H1 (cell line): ENCODE measurements at regions of chr4 and their contacts with region 1.

Region 1: GRCh38 chr4:142567199-142567598 is 278.9 kb downstream of the INPP4B start:
- DNase-seq: peak; percentile 25 to 49
- H3K4me3 ChIP-seq: no peak overlapping the region
- H3K27ac ChIP-seq: no peak overlapping the region
- H3K4me1 ChIP-seq: no peaks in the 10 kb centered on the region
- H3K27me3 ChIP-seq: no peaks in the 10 kb centered on the region
- CTCF ChIP-seq: peak in 2 of 3 experiments; percentile 34 to 45; a peak in 3 of 4 replicates
- EP300 ChIP-seq: no peak
- POLR2A ChIP-seq: no peak
- RAD21 ChIP-seq: peak; percentile 62 to 71

Region 2: GRCh38 chr4:142238589-142238988 is 328.6 kb before region 1 on chr4:
- CTCF ChIA-PET with region 1: no interaction called
- POLR2A ChIA-PET with region 1: no interaction called
- DNase-seq: no peak
- H3K4me3 ChIP-seq: no peak overlapping the region
- H3K27ac ChIP-seq: no peak overlapping the region
- H3K4me1 ChIP-seq: no peaks in the 10 kb centered on the region
- H3K27me3 ChIP-seq: no peaks in the 10 kb centered on the region
- CTCF ChIP-seq: no peak
- EP300 ChIP-seq: no peak
- POLR2A ChIP-seq: no peak
- RAD21 ChIP-seq: no peak

Region 3: DNA sequence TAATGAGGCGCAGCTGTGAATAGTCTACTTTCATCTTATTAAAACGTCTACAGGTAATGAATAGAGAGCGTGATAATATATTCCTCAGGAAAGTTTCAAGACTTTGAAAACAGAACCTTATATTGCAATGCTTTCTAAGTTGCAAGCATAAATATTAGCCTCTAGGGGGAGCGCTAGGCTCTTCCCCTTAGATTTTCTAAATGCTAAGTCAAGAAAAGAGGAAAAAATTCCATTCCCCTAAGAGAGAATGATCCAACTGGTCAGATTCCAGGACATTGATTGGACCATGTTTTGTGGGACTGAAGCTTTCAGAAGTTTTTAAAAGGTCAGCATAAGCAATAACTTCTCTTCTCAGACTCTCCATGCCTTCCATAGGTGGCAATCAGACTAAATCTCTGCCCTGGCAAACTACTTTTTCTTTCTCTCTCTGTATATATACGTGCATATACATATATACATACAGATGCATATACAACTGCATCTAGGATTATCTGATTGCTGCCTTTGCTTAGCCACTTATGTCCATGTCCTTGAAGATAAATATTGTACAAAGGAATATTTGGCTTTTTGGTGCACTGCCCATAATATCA is 214.0 kb before region 1 on chr4:
- CTCF ChIA-PET with region 1: interaction called, 13 read pairs
- POLR2A ChIA-PET with region 1: no interaction called
- DNase-seq: no peak
- H3K4me3 ChIP-seq: no peak overlapping the region
- H3K27ac ChIP-seq: no peak overlapping the region
- H3K4me1 ChIP-seq: no peaks in the 10 kb centered on the region
- H3K27me3 ChIP-seq: no peaks in the 10 kb centered on the region
- CTCF ChIP-seq: peak in 2 of 3 experiments; percentile 48 to 71; a peak in 2 of 4 replicates
- EP300 ChIP-seq: no peak
- POLR2A ChIP-seq: no peak
- RAD21 ChIP-seq: peak; percentile 79 to 83

Region 4: GRCh38 chr4:142383800-142384635 is 183.2 kb before region 1 on chr4:
- CTCF ChIA-PET with region 1: no interaction called
- POLR2A ChIA-PET with region 1: no interaction called
- DNase-seq: no peak
- H3K4me3 ChIP-seq: no peak overlapping the region
- H3K27ac ChIP-seq: no peak overlapping the region
- H3K4me1 ChIP-seq: peaks cover 0 to 5% (median 0%) of the 10 kb centered on the region in 4 experiments; a peak in 1 of 7 replicates
- H3K27me3 ChIP-seq: no peaks in the 10 kb centered on the region
- CTCF ChIP-seq: no peak
- EP300 ChIP-seq: no peak
- POLR2A ChIP-seq: no peak
- RAD21 ChIP-seq: no peak

Region 5: DNA sequence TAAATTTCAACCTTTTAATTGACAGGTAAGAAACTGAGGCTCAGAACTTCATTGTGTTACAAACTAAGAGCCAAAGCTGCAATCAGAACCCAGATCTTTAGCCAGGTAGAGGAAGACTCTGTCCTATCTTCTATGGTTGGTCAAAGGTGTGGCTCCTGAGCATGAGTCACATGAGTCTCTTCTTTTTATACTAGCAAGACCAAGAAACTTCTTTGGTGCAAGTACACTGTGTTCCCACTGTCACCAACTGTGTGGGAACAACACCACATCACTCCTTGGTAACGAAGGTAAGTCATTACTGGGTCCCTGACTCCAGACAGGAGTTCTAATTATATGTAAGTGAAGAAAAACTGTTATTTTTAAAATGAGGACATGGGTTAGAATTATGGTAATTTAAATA is 11.2 kb before region 1 on chr4:
- CTCF ChIA-PET with region 1: interaction called, 10 read pairs
- POLR2A ChIA-PET with region 1: no interaction called
- DNase-seq: no peak
- H3K4me3 ChIP-seq: no peak overlapping the region
- H3K27ac ChIP-seq: no peak overlapping the region
- H3K4me1 ChIP-seq: no peaks in the 10 kb centered on the region
- H3K27me3 ChIP-seq: no peaks in the 10 kb centered on the region
- CTCF ChIP-seq: no peak
- EP300 ChIP-seq: no peak
- POLR2A ChIP-seq: no peak
- RAD21 ChIP-seq: no peak

Region 6: DNA sequence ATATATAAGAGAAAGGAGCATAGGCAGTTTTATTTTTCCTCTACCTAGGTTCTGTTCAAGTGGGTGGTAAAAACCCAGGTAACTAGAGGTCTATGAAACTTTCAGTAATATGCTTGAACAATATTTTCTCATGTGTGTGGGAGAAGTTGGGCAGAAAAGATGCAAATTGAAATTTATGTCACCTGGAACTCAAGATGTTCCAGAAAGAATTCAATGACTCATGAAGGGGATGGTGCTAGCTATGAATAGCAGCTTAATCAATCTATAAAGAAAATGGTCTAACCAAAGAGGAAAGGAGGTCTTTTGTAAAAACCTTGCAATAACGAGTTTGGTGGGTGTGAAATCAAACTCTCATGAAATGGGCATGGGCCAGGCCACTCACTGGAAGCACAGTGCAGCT is 15.1 kb after region 1 on chr4:
- CTCF ChIA-PET with region 1: no interaction called
- POLR2A ChIA-PET with region 1: no interaction called
- DNase-seq: no peak
- H3K4me3 ChIP-seq: no peak overlapping the region
- H3K27ac ChIP-seq: no peak overlapping the region
- H3K4me1 ChIP-seq: no peaks in the 10 kb centered on the region
- H3K27me3 ChIP-seq: no peaks in the 10 kb centered on the region
- CTCF ChIP-seq: no peak
- EP300 ChIP-seq: no peak
- POLR2A ChIP-seq: no peak
- RAD21 ChIP-seq: no peak